Lower leg skin (tissue), 4 donors: ENCODE measurements at regions of chr9 and their contacts with region 1.

Region 1: GRCh38 chr9:92140074-92140753 is 25.0 kb upstream of the SPTLC1 start:
- DNase-seq: peak; percentile 55 to 96
- H3K4me3 ChIP-seq: no peak overlapping the region
- CTCF ChIP-seq: peak in 1 of 3 donors; percentile 72
- POLR2A ChIP-seq: no peak

Region 2: GRCh38 chr9:92242260-92243136 is 102.3 kb after region 1 on chr9:
- intact Hi-C with region 1: loop called (anchors 5 kb)
- DNase-seq: no peak
- H3K4me3 ChIP-seq: no peak overlapping the region
- CTCF ChIP-seq: no peak
- POLR2A ChIP-seq: no peak

Region 3: GRCh38 chr9:92254381-92255337 is 114.4 kb after region 1 on chr9:
- intact Hi-C with region 1: loop called (anchors 5 kb)
- DNase-seq: no peak
- H3K4me3 ChIP-seq: no peak overlapping the region
- CTCF ChIP-seq: no peak
- POLR2A ChIP-seq: no peak

Region 4: GRCh38 chr9:92634712-92635605 is 494.7 kb after region 1 on chr9:
- intact Hi-C with region 1: loop called (anchors 10 kb)
- DNase-seq: peak; percentile 61 to 92
- H3K4me3 ChIP-seq: no peak overlapping the region
- CTCF ChIP-seq: peak in 1 of 3 donors; percentile 67
- POLR2A ChIP-seq: no peak

Region 5: DNA sequence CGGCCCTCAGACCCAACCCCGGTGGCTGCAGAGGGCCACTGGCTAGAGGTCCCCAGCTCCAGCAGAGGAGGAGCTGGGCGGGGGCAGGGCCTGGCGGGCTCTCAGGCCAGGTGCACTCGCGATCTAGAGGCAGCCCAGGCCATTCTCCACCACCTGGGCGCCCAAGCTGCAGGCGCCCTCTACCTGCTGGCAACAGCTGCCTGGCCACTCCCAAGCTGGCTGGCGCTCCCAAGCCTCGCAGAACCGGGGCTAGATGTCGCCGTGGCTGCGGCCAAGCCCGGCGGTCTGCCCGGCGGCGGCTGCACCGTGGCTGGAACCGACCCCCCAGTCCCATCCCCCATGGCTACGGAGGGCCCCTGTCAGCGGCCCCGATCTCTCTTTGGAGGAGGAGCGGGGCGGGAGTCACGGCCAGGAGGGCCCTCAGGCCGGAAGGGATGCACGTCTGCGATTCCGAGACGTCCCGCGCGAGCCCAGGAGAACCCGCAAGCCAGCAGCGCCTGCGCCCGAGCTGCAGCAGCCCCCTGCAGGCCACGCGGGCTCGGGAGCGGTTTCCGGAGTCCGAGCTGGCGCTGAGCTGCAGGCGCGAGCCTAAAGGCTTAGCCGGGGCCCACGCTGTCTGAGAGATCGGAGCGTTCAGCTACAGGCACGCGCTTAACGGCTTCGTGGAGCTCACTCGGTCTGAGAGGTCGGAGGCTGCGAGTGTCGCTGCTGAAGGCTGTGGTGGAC is 668.7 kb after region 1 on chr9:
- intact Hi-C with region 1: loop called (anchors 10 kb)
- DNase-seq: peak in 1 of 2 donors; percentile 93
- H3K4me3 ChIP-seq: no peak overlapping the region
- CTCF ChIP-seq: no peak
- POLR2A ChIP-seq: no peak